OCI-LY7 (cell line): ENCODE measurements at regions of chr1 and their contacts with region 1.

Region 1: GRCh38 chr1:234610348-234611152 is 572 bp upstream of the IRF2BP2 start:
- DNase-seq: peak; percentile 79
- H3K4me3 ChIP-seq: peak overlapping the region; percentile 70
- H3K27ac ChIP-seq: peak overlapping the region; percentile 80
- H3K4me1 ChIP-seq: peaks cover 63% of the 10 kb centered on the region
- CTCF ChIP-seq: no peak

Region 2: GRCh38 chr1:234271243-234271606 is 339.3 kb before region 1 on chr1:
- CTCF ChIA-PET with region 1: no interaction called
- POLR2A ChIA-PET with region 1: no interaction called
- intact Hi-C with region 1: no loop called
- DNase-seq: no peak
- H3K4me3 ChIP-seq: no peak overlapping the region
- H3K27ac ChIP-seq: no peak overlapping the region
- H3K4me1 ChIP-seq: no peaks in the 10 kb centered on the region
- CTCF ChIP-seq: no peak

Region 3: DNA sequence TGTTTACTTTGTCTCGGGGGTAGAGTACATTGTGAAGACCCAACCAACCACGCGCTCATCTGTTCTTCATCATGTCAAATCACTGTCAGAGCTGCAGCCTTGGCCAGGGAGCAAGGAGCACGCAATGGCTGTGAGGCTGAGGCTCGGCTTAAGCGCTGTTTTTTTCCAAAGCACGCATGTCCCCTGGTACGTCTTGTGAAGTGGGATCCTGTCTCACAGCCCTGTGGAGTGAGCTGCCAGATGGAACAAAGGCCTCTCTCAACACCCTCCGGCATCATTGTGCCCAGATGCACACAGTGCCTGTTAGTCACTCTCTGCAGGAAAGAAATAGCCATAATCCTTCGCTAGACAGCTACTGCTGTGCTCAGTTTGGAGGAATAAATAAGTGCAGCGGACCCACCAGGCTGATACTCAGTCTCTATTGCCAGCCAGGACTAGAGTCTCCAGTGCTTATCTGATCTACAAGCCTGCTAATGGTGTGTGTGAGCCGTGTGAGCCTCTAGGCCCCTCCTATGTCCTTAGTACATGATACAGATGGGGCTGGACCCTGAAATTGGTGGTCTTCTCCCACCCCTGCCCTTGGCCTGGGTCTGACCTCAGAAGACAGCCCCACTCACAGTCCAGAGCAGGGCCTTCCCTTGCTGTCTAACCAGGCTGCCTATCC is 328.6 kb before region 1 on chr1:
- CTCF ChIA-PET with region 1: no interaction called
- POLR2A ChIA-PET with region 1: no interaction called
- intact Hi-C with region 1: no loop called
- DNase-seq: no peak
- H3K4me3 ChIP-seq: no peak overlapping the region
- H3K27ac ChIP-seq: no peak overlapping the region
- H3K4me1 ChIP-seq: no peaks in the 10 kb centered on the region
- CTCF ChIP-seq: no peak

Region 4: DNA sequence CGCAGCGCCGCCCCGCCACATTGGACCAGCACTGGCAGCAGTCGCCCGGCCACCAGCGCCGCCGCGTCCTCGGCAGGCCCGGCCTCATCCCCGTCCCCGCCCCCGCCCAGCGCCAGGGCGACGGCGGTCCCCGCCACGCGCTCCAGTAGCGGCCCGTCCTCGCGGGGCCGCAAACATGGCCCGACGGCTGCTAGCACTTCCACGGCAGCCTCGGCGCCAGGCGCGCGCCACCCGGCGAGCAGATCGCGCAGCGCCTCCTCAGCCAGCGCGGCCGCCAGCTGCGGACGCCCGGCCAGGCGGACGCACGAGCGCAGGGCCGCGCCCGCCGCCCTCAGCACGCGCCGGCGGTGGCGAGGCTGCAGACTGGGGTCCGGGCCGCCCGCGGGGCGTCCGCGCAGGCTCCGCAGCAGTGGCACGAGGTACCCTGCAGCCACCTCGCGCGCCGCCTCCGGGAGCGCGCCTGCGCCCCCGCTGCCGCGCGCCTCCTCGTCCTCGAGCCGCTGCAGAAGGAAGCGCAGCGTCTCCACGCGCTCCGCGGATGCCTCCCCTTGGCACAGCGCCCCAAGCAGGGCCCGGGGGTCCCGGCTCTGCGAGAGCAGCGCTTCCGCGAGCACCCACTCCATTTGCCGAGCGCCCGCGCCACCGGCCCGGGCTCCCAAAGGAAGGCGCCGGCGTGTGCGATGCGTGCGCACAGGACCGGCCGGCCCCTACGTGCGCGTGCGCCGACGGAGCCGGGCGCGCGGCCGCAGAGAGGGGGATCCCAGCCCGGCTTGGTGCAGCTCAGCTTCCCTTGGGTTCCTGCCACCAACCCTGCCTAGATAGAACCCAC is 131.9 kb before region 1 on chr1 and contains the start of gene TARBP1:
- CTCF ChIA-PET with region 1: no interaction called
- POLR2A ChIA-PET with region 1: interaction called, 6 read pairs
- intact Hi-C with region 1: loop called (anchors 1 kb)
- DNase-seq: peak; percentile 90
- H3K4me3 ChIP-seq: peak within 1 kb of the TSS; percentile 72
- H3K27ac ChIP-seq: peak within 1 kb of the TSS; percentile 81
- H3K4me1 ChIP-seq: peaks cover 49% of the 10 kb centered on the region
- CTCF ChIP-seq: 0 out of 2 replicates have a peak, but pooled peaks have one; percentile 13
- total RNA-seq, gene TARBP1: 30.0 and 30.5 TPM in 2 replicates

Region 5: GRCh38 chr1:234515821-234516241 is 94.7 kb before region 1 on chr1:
- CTCF ChIA-PET with region 1: no interaction called
- POLR2A ChIA-PET with region 1: interaction called, 27 read pairs
- intact Hi-C with region 1: no loop called
- DNase-seq: no peak
- H3K4me3 ChIP-seq: no peak overlapping the region
- H3K27ac ChIP-seq: no peak overlapping the region
- H3K4me1 ChIP-seq: peaks cover 51% of the 10 kb centered on the region
- CTCF ChIP-seq: no peak

Region 6: DNA sequence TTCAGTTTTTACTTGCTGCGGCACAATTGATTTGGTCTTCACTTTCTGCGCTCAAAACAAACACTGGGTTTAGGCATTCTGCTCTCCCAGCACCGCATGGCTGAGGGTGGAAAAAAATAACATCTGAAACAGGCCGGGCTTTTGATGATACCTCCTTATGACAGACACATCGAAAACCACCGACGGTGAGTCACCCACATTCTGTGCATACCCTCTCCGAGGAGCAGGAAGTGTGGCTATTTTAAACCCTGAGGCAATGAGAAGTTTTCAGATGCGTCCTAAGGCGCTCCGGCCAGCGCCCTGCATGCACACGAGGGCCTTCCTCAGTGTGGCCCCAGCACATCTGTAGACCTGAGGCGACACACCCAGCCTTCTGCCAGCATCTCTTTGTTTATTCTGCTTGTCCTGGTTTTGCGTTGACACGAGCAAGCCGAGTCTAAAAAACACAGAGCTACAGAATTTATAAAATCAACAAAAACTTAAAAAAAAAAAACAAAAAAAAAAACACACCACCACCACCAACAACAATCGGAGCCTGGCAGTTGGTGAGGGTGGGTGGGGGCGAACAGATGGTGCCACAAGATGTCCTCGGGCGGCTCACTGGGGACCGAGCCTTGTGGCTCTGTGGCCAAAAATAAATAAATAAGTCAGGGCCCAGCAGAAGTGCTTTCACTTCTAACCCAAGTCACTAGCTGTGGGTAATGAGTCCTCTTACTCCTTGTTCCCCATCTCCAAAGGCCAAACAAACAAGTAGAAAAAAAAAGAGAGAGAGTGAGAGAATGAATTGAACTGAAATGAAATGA is 162.0 kb after region 1 on chr1:
- CTCF ChIA-PET with region 1: no interaction called
- POLR2A ChIA-PET with region 1: interaction called, 5 read pairs
- intact Hi-C with region 1: loop called (anchors 2 kb)
- DNase-seq: peak; percentile 88
- H3K4me3 ChIP-seq: peak overlapping the region; percentile 39
- H3K27ac ChIP-seq: peak overlapping the region; percentile 66
- H3K4me1 ChIP-seq: peaks cover 33% of the 10 kb centered on the region
- CTCF ChIP-seq: no peak

Region 7: DNA sequence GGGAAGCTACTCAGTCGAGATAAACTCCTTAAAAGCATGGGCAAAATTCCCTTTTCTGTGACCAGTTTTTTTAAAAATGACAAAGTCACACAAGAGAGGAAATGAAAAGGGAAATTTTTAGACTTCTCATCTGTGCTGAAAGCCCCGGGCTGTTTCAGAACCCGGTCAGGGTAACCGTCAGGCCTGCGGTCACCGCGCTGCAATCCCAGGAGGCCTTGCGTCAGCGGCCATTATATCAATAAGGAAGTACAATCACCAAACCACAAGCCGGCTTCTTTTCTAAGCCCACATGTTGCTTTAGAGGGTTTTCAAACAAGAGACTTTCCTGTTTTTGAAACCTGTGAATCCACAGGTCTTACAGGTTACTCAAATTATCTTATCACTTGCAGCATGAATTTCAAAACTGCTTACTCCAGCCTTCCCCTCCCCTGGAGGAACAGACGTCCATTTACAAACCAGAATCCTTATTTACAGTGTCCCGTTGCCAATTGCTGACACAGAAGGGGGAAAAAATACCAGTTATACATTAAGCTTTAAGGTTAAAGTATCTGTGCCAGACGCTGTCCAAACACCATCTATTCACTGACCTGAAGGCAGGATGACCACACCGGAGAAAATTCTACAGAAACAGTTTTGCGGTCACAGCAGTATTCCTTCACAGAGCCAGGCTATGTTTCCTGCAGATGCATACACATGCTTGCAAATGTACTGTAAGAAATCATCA is 352.8 kb after region 1 on chr1:
- CTCF ChIA-PET with region 1: no interaction called
- POLR2A ChIA-PET with region 1: interaction called, 15 read pairs
- intact Hi-C with region 1: loop called (anchors 1 kb)
- DNase-seq: peak; percentile 97
- H3K4me3 ChIP-seq: peak overlapping the region; percentile 56
- H3K27ac ChIP-seq: peak overlapping the region; percentile 97
- H3K4me1 ChIP-seq: peaks cover 74% of the 10 kb centered on the region
- CTCF ChIP-seq: no peak